Sciatic nerve (tissue), 2 donors: ENCODE measurements at regions of chr1 and their contacts with region 1.

Region 1: DNA sequence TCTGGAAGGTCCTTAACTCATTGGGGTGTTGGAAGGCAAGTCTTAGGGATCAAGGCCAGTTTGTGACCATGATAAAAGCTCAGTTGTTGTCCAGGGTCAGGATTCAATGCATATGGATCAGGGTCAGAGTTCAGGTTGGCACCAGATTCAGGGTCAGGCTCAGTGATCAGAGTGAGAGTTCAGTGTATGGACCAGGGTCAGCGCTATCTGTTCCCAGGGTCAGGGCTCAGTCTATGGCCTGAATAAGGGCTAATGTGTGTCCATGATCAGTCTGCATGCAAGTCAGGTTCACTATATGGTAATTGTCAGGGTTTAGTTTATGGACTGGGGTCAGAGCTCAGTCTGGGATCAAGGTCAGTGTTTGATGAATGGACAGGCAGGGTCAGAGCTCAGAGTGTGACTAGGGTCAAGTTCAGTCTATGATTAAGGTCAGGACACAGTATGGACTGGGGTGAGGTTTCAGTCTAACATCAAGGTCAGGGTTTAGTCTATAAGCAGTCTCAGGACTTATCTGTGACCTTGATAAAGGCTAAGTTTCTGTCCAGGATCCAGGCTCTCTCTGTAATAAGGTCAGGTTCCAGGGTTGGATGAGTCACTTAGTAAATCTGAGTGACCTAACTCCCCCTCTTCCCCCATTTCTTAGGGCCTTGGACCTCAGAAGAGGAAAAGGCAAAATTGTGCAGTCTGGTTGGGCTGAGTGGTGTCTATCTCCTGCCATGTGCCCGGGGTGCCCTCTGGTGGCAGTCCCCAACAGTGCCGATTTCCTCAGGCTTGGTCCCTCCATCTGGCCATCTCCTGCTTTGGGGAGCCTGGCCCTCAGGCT is 23.8 kb downstream of the KNCN start:
- DNase-seq: peak; percentile 89
- ATAC-seq: peak; percentile 87

Region 2: GRCh38 chr1:46401964-46402626 is 125.6 kb before region 1 on chr1:
- intact Hi-C with region 1: loop called (anchors 10 kb)
- DNase-seq: peak; percentile 84
- ATAC-seq: peak; percentile 91

Region 3: DNA sequence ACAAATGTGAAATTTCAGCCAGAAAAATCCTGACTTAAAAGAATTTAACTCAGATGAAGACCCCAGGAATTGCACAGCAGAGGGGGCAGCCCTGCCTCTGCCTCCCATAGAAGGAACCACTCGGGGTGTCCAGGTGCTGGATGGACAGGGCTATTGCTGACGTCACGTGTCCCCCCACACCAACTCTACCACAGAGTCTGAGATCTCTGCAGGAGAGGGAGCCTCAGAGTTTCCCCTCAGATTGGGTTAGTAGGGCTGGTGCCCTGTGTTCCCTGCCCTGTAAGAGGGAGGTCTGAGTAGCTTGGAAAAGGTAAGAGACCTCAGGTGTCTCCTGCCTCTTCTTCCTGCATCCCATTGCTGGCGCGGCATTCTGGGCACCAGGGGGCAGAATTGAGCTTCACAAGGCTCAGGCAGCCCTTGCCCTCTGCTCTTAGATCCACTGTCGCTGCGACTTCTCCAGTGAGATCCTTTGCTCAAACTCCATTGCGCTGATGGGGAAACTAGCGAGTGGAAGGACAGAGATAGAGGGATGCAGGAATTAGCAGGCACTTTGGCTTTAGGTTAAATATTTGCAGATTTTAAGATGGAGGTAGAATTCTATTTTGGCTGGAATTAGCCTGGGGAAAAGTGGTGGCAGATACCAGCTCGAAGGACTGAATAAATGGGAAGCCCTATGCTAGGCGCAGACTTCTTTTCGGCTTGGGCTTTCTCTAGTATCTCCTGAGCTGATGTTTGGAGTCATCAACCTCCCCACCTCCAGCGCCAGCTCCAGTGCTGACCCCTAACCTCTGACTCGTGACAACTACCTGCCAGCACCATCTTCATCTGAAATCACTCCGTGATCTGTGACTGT is 80.8 kb before region 1 on chr1:
- intact Hi-C with region 1: loop called (anchors 5 kb)
- DNase-seq: peak; percentile 85
- ATAC-seq: peak; percentile 67

Region 4: DNA sequence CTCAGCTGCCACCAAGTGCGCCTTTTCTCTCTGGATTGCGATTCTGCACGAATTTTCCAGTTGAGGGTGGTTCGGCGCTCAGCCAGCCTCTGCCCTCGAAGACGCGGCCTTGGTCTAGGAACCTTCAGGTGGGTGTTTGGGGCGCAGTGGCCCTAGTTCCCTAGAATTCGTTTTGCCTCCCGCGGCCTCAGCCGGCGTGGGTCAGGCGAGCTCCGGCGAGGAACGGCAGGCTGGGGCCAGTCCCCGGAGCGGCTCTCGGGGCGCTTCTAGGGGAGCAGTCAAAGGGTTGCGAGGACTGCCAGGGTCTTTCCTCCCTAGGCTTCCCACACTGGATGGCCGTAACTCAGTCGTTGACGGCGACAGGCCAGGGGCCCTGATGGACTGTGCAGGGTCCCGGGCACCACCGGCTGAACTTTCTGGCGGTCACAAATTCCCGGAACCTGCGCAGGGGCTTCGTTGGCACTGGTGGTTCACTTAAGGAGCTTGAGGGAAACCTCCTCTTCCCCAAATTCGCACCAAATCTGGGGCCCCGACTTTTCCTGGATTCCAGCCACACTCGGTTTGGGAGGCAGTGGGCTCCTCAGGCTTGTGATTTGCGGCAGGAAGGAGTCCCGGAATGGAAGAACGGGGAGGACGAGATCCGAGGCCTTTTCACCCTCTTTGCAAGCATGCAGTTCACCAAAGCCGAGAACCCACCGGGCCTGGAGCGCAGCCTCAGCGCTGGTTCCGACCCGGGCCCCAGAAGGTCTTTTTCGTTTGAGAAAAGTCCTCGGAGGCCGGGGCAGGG is 36.8 kb before region 1 on chr1:
- intact Hi-C with region 1: no loop called
- DNase-seq: no peak
- ATAC-seq: no peak

Region 5: DNA sequence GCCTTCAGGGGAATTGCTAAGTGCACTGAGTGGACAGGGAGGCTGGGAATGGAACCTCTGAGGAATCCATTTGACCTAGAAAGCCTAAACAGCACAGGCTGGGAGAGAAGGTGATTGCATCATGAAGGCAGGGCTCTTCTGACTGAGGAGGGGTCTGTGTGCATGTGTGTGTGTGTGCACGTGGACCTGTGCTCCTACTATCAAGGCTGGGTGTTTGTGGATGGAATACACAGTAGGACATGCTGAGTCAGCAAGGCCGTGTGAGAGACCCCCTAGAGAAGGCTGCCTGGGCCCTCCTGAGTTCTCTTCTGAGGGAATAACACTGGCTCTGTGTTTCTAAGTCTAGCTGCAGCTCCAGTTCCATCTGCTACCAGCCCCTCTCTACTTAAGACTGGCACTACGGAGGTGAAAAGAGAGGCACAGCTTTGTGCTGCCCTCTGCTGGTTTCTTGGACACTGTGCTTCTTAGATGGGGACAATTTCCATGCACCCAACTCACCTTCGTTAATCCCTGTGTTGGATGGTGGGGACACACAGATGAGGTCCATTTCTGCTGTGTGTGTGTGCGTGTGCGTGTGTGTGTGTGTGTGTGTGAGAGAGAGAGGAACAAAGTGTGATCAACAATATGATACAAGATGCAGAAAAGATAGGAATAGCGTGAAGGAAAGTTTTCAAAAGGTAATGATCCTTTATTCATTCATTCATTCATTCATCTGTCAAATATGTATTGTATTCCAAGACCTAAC is 197.5 kb after region 1 on chr1:
- intact Hi-C with region 1: loop called (anchors 5 kb)
- DNase-seq: peak; percentile 78
- ATAC-seq: peak; percentile 94